ENCODE measurements at regions of chr12 and their contacts with region 1.

Region 1: DNA sequence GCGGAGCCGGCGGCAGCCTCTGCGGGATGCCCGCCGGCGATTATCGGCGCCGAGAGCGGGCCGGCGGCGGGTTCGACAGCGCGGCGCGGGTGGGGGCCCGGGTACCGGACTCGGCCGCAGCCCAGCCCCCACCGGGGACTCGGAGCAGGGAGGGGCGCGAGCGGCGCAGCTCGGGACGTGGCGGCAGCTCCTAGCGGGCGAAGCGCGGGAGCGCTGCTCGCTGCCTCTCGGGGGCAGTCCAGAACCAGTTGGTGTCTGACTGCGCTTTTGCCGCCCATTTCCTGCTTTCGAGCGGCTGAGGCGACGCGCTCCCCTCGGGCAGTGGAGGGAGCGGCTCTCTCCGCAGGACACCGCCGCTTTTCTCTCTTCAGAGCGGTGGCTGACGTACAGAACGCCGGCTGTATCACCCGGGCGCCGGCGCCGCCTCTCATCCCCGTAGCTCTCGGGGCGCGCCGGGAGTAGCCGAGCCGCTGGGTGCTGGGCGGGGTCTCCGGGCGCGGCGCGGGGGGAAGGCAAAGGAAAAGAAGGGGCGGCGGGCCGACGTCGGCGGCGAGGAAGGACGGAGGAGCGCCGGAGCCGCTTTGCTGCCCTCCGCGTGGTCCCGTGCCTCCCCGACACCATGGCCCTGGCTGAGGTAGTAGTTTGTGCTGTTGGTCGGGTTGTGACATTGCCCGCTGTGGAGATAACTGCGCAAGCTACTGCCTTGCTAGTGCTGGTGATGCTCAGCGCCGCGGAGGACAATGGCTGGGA is 136.6 kb downstream of the MON2 start:
- DNase-seq: peak; percentile 35 to 91
- H3K4me3 ChIP-seq: peak overlapping the region; percentile 87 to 97
- H3K27ac ChIP-seq: peak overlapping the region; percentile 99 to 100
- H3K4me1 ChIP-seq: peaks cover 3 to 5% of the 10 kb centered on the region in 2 donors
- H3K27me3 ChIP-seq: no peaks in the 10 kb centered on the region
- CTCF ChIP-seq: peak; percentile 38 to 82 (median 59)

Region 2: DNA sequence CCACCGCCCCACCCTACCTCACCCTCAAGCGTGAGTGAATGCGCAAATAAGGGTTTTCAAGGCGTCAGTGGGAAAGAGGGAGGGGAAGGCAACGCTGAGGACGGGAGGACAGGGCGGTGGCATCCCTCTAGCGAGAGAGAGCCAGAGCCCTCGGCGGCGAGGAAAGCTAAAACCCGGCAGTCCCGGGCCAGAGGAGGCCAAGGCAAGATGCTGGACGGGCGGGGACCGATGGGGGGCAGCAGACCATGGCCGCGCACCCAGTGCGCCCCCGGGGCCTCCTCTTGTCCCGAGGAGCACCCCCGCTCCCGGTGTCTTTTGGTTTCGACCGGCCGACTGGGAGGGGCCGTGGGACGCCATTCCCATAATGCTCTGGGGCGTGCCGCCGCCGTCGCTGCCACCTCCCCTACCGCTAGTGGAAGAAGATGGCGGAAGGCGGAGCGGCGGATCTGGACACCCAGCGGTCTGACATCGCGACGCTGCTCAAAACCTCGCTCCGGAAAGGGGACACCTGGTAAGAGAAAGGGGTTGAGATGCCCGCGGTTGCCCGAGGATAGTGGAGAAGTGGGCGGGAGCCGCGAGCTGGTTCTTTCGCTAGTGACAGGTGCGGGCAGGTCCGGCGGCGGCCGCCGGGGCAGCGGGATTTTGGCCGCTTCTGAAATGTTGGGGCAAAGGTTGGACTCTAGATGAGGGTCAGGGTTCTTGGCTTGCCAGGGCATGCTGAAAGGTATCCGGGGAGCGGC is 343.1 kb before region 1 on chr12 and contains the start of gene USP15:
- intact Hi-C with region 1: loop called (anchors 2 kb)
- DNase-seq: peak; percentile 86 to 98
- H3K4me3 ChIP-seq: peak within 1 kb of the TSS; percentile 92 to 98
- H3K27ac ChIP-seq: peak within 1 kb of the TSS; percentile 89 to 92
- H3K4me1 ChIP-seq: peaks cover 9 to 18% of the 10 kb centered on the region in 2 donors
- H3K27me3 ChIP-seq: no peaks in the 10 kb centered on the region
- CTCF ChIP-seq: peak; percentile 65 to 77 (median 73)
- total RNA-seq, gene USP15: 48.2 TPM

Region 3: DNA sequence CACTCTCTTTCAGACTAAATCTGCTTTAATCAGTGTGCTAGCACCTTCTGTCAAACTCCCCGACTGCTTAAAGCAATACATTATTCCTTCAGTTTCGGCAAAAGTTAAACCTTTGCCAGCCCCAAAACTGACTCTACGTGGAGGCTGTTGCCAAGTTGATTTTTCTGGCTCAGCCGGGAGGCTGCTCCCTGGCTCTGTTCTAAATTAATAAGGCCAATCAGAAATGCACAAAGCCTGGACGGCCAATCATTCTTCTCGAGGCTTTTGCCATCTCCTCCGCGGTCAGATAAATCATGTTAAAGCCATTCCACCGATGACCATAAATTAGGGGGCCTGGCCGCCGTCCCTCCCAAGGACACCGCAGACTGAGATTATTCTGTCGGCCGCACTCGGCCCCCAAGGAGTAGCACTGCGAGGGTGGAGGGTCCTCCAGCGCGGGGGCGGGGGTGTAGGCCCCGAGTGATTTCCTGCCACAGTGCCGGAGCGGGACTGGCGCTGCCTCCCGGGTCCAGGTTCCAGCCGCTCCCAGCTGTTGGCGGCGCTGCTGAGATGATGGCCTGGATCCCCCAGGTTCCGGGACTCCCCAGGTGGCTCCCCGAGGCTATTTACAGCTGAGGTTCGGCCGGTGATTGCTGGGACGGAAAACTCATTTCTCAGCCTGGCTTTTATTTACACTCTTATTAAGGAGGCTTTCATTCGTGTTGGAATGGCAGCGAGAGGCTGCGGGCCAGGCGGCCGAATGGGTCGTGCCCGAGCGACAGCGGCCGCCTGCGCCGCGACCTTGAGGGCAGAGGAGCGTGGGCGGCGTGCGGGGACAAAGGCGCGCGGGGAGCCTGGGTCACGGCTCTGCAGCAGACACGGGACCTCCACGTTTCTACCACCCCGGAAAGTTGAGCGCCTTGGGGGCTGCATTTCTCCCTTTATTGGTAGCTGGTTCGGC is 28.5 kb after region 1 on chr12:
- intact Hi-C with region 1: loop called (anchors 1 kb)
- DNase-seq: peak in 1 of 2 donors; percentile 84
- H3K4me3 ChIP-seq: peak overlapping the region; percentile 59 to 74
- H3K27ac ChIP-seq: peak overlapping the region; percentile 69 to 81
- H3K4me1 ChIP-seq: peaks cover 0 to 4% of the 10 kb centered on the region in 2 donors
- H3K27me3 ChIP-seq: no peaks in the 10 kb centered on the region
- CTCF ChIP-seq: peak in 2 of 3 experiments; percentile 33 to 66

Region 4: DNA sequence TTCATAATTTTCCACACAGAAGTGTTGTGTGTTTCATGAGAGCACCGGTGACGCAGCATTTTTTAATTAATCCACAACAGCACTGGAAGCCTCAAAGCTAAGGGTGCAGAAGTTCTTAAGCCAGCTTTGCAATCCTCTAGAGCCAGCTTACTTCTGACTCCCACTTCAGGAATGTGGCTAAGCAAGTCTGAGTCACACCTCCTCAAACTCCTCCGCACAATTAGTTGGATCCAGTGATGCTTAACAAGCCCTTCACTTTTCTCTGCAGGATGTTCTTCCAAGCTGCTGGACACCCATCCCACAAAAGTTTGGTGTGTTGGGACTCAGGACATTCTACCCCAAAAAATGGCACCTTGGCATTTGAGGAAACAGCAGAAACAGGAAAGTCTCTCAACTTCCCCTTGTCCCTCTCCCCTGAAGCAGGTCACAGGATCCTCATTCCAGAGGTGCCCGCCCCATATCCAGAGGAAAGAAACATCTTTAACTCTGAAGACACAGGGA is 121.8 kb after region 1 on chr12:
- intact Hi-C with region 1: loop called (anchors 2 kb)
- DNase-seq: peak in 1 of 2 donors; percentile 84
- H3K4me3 ChIP-seq: no peak overlapping the region
- H3K27ac ChIP-seq: peak overlapping the region; percentile 2 to 8
- H3K4me1 ChIP-seq: peaks cover 3 to 14% of the 10 kb centered on the region in 2 donors
- H3K27me3 ChIP-seq: no peaks in the 10 kb centered on the region
- CTCF ChIP-seq: no peak

Region 5: DNA sequence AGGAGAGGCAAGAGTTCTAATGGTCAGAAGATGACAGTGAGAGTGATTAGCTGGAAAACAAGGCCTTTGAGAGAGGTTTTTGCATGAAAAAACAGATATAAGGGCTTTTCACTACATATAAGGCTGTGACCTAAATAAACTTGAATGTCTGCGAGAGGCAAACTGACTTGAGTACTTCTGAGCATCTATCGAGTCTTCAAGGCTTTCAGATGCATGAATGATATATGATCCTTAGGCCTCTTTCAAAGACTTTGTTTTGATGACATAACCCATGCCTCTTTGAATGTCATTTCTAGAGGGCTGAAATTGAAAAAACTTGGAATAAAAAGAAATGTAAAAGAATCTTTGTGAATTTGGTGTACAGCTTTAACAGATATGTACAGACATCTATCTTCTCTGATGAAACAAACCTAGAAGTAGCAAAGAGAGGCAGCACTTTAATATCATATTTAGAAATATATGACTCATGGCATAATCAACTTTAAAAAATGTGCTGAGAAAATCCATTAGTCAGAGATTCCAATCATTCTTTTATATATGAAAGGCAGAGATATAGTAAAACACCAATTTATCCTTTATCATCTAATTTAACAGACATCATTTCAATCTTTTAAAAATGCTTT is 259.1 kb after region 1 on chr12:
- intact Hi-C with region 1: loop called (anchors 5 kb)
- DNase-seq: no peak
- H3K4me3 ChIP-seq: no peak overlapping the region
- H3K27ac ChIP-seq: peak overlapping the region in 1 of 2 donors; percentile 70
- H3K4me1 ChIP-seq: peaks cover 0 to 21% of the 10 kb centered on the region in 2 donors
- H3K27me3 ChIP-seq: no peaks in the 10 kb centered on the region
- CTCF ChIP-seq: no peak

Region 6: GRCh38 chr12:63045020-63045860 is 442.0 kb after region 1 on chr12:
- intact Hi-C with region 1: loop called (anchors 10 kb)
- DNase-seq: peak in 1 of 2 donors; percentile 78
- H3K4me3 ChIP-seq: no peak overlapping the region
- H3K27ac ChIP-seq: peak overlapping the region; percentile 78 to 86
- H3K4me1 ChIP-seq: peaks cover 0 to 9% of the 10 kb centered on the region in 2 donors
- H3K27me3 ChIP-seq: no peaks in the 10 kb centered on the region
- CTCF ChIP-seq: no peak

Measured in ascending aorta (tissue), 2 donors.